ENCODE measurements at regions of chr7 and their contacts with region 1.

Region 1: GRCh38 chr7:129091484-129092002 is 36.6 kb upstream of the TNPO3 start:
- H3K4me3 Mint-ChIP-seq: no peak overlapping the region
- H3K27ac Mint-ChIP-seq: no peak overlapping the region
- H3K4me1 Mint-ChIP-seq: peaks cover 29% of the 10 kb centered on the region
- H3K27me3 Mint-ChIP-seq: no peaks in the 10 kb centered on the region

Region 2: DNA sequence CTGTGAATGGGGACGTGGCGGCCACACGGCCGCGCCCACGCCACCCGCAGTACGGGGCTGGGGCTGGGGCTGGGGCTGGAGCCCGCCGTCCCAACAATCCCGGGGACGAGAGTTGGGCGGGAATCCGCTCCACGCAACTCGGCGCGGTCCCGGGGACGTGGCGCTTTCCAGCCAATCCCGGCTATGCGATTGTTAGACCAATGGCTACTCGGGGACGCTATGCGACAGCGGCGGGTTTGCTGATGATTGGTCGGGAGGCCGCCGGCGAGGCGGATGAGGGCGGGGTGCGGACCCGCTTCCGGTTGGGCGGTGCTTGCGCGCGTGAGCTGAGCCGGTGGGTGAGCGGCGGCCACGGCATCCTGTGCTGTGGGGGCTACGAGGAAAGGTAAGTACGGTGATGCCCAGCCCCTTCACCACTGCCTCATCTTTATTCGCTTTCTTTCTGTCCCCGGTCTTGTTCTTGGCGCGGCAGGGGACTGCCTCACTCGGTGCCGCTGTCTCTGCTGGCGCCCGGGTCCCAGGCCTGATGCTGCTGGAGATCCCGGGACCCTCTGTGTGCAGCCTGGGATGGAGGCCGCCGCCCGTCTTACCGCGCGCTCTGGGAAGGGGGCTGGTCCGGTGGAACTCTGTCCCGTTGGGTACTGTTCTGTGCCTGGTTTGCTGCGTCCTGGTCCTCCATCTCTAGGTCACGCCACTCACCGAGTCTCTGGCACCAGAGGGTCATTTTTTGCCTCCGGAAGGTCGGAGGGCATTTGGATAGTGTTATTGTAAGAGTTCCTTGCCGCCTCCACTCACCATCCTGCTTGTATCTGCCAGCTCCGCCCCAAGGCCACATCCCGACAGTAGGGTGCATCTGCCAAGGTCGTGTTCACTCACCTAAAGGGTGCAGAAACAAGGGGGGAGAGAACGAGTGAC is 352.2 kb before region 1 on chr7 and contains the start of gene CALU:
- intact Hi-C with region 1: no loop called
- H3K4me3 Mint-ChIP-seq: peak within 1 kb of the TSS; percentile 96
- H3K27ac Mint-ChIP-seq: peak within 1 kb of the TSS; percentile 96
- H3K4me1 Mint-ChIP-seq: peaks cover 41% of the 10 kb centered on the region
- H3K27me3 Mint-ChIP-seq: no peaks in the 10 kb centered on the region

Region 3: GRCh38 chr7:128904381-128905197 is 187.0 kb before region 1 on chr7:
- intact Hi-C with region 1: loop called (anchors 1 kb)
- H3K4me3 Mint-ChIP-seq: no peak overlapping the region
- H3K27ac Mint-ChIP-seq: peak overlapping the region; percentile 54
- H3K4me1 Mint-ChIP-seq: peaks cover 34% of the 10 kb centered on the region
- H3K27me3 Mint-ChIP-seq: peaks cover 31% of the 10 kb centered on the region

Region 4: DNA sequence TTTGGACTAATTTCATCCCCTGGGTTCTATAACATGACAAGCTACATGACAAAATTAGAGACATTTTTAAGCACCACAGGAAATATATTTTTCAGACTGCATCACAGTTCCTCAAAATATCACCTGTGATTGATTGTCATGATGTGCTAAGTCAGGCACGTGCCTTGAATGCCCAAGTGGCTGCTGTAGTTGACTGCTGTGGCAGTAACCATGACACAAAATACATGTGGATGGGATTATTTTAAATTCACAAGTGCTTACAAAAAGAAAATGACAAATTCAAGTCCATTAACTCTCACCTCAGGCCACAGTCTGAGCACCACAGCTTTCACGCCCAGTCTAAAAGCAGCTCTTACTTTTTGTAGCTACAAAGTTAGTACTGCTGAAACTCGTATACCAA is 82.1 kb before region 1 on chr7:
- intact Hi-C with region 1: loop called (anchors 10 kb)
- H3K4me3 Mint-ChIP-seq: no peak overlapping the region
- H3K27ac Mint-ChIP-seq: no peak overlapping the region
- H3K4me1 Mint-ChIP-seq: peaks cover 36% of the 10 kb centered on the region
- H3K27me3 Mint-ChIP-seq: no peaks in the 10 kb centered on the region

Region 5: GRCh38 chr7:129054438-129055293 is 36.9 kb before region 1 on chr7 and contains the start of gene TNPO3:
- intact Hi-C with region 1: loop called (anchors 2 kb)
- H3K4me3 Mint-ChIP-seq: peak within 1 kb of the TSS; percentile 86
- H3K27ac Mint-ChIP-seq: peak within 1 kb of the TSS; percentile 99
- H3K4me1 Mint-ChIP-seq: peaks cover 44% of the 10 kb centered on the region
- H3K27me3 Mint-ChIP-seq: peaks cover 3% of the 10 kb centered on the region

Region 6: DNA sequence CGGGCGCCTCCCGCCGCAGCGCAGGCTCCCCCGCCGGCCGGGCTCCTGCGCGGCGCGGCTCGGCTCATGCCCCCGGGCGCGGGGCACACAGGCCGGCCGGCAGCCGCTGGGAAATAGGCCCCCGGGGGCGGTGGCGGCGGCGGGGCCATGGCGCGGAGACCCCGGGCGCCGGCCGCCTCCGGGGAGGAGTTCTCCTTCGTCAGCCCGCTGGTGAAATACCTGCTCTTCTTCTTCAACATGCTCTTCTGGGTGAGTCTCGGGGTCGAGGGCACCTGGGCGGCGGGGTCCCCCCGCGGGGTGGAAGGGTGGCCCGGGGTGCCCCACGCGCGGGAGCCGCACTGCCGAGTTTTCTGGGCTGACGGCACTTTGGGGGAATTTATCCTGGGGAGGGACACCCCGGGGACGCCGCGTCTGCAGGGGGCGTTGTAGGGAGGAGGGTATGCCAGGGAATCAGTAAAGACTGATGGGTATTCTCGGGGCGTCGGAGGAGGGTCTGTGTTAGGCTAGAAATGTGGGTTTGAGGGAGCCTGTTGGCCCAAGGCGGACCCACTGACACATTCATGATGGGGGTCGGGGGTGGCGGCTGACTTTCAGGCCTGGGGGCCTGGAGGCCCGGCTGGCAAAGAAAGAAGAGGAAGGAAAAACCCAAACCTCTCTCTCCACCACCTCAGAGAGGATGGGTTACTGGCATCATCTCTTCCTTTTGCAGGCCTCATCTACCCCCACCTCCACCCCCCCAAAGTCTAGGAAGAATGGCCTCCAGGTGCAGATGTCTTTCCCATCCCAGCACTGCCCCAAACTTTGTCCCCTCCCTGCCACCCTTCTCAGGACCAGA is 53.5 kb after region 1 on chr7:
- intact Hi-C with region 1: loop called (anchors 5 kb)
- H3K4me3 Mint-ChIP-seq: peak overlapping the region; percentile 85
- H3K27ac Mint-ChIP-seq: peak overlapping the region; percentile 70
- H3K4me1 Mint-ChIP-seq: peaks cover 61% of the 10 kb centered on the region
- H3K27me3 Mint-ChIP-seq: peaks cover 24% of the 10 kb centered on the region